CD8-positive, alpha-beta T cell (primary cell): ENCODE measurements at regions of chr17 and their contacts with region 1.

Region 1: GRCh38 chr17:78421484-78422266 is 43.2 kb downstream of the PGS1 start:
- DNase-seq: peak; percentile 59 to 82 (median 75)
- ATAC-seq: peak; percentile 97
- H3K4me3 ChIP-seq: no peak overlapping the region
- H3K4me3 Mint-ChIP-seq: no peak overlapping the region
- H3K27ac ChIP-seq: no peak overlapping the region
- H3K27ac Mint-ChIP-seq: no peak overlapping the region
- H3K4me1 ChIP-seq: peaks cover 5% of the 10 kb centered on the region
- H3K4me1 Mint-ChIP-seq: peaks cover 11% of the 10 kb centered on the region
- H3K27me3 ChIP-seq: no peaks in the 10 kb centered on the region
- H3K27me3 Mint-ChIP-seq: no peaks in the 10 kb centered on the region
- CTCF ChIP-seq: peak; percentile 99

Region 2: GRCh38 chr17:78089576-78090281 is 331.9 kb before region 1 on chr17:
- CTCF ChIA-PET with region 1: interaction called, 3 read pairs
- POLR2A ChIA-PET with region 1: no interaction called
- intact Hi-C with region 1: loop called in 1 of 2 experiments (anchors 5 kb)
- DNase-seq: no peak
- ATAC-seq: no peak
- H3K4me3 ChIP-seq: no peak overlapping the region
- H3K4me3 Mint-ChIP-seq: no peak overlapping the region
- H3K27ac ChIP-seq: no peak overlapping the region
- H3K27ac Mint-ChIP-seq: peak overlapping the region; percentile 46
- H3K4me1 ChIP-seq: no peaks in the 10 kb centered on the region
- H3K4me1 Mint-ChIP-seq: peaks cover 3% of the 10 kb centered on the region
- H3K27me3 ChIP-seq: no peaks in the 10 kb centered on the region
- H3K27me3 Mint-ChIP-seq: no peaks in the 10 kb centered on the region
- CTCF ChIP-seq: no peak

Region 3: GRCh38 chr17:78112518-78113226 is 309.0 kb before region 1 on chr17:
- CTCF ChIA-PET with region 1: interaction called, 4 read pairs
- POLR2A ChIA-PET with region 1: no interaction called
- intact Hi-C with region 1: loop called in 1 of 2 experiments (anchors 1 kb)
- DNase-seq: peak; percentile 62 to 91 (median 78)
- ATAC-seq: peak; percentile 67
- H3K4me3 ChIP-seq: no peak overlapping the region
- H3K4me3 Mint-ChIP-seq: peak overlapping the region; percentile 42
- H3K27ac ChIP-seq: peak overlapping the region in 1 of 2 experiments; percentile 74
- H3K27ac Mint-ChIP-seq: peak overlapping the region; percentile 90
- H3K4me1 ChIP-seq: peaks cover 45% of the 10 kb centered on the region
- H3K4me1 Mint-ChIP-seq: peaks cover 42% of the 10 kb centered on the region
- H3K27me3 ChIP-seq: no peaks in the 10 kb centered on the region
- H3K27me3 Mint-ChIP-seq: no peaks in the 10 kb centered on the region
- CTCF ChIP-seq: peak; percentile 99

Region 4: DNA sequence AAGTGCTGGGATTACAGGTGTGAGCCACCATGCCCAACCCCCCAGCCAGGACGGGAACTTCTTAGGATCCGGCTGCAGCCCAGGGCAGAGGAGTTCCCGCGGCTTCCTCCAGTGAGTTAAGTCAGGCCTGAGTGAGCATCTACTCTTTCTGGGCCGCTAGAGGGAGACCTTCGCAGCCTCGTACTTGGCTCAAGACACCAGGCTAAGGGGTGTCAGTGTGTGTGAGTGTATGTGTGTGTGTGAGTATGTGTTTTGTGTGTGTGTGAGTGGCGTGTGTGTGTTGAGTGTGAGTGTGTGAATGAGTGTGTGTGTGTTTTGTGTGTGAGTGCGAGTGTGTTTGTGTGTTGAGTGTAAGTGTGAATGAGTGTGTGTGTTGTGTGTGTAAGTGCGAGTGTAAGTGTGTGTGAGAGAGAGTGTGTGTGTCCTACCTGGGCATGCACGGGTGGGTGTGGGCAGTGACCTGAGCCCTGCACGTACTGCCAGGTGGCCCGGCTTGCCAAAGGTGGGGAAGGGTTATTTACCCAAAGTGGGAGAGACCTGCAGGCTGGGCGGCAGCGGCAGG is 131.8 kb before region 1 on chr17:
- CTCF ChIA-PET with region 1: interaction called, 44 read pairs
- POLR2A ChIA-PET with region 1: interaction called, 4 read pairs
- intact Hi-C with region 1: loop called (anchors 1 kb)
- DNase-seq: peak; percentile 49 to 89 (median 77)
- ATAC-seq: peak; percentile 99
- H3K4me3 ChIP-seq: no peak overlapping the region
- H3K4me3 Mint-ChIP-seq: no peak overlapping the region
- H3K27ac ChIP-seq: no peak overlapping the region
- H3K27ac Mint-ChIP-seq: no peak overlapping the region
- H3K4me1 ChIP-seq: peaks cover 9% of the 10 kb centered on the region
- H3K4me1 Mint-ChIP-seq: peaks cover 4% of the 10 kb centered on the region
- H3K27me3 ChIP-seq: no peaks in the 10 kb centered on the region
- H3K27me3 Mint-ChIP-seq: no peaks in the 10 kb centered on the region
- CTCF ChIP-seq: peak; percentile 68

Region 5: GRCh38 chr17:78383725-78384471 is 37.8 kb before region 1 on chr17:
- CTCF ChIA-PET with region 1: interaction called, 14 read pairs
- POLR2A ChIA-PET with region 1: no interaction called
- intact Hi-C with region 1: loop called in 1 of 2 experiments (anchors 5 kb)
- DNase-seq: peak in 4 of 9 experiments; percentile 16 to 54 (median 25)
- ATAC-seq: no peak
- H3K4me3 ChIP-seq: no peak overlapping the region
- H3K4me3 Mint-ChIP-seq: peak overlapping the region; percentile 51
- H3K27ac ChIP-seq: peak overlapping the region in 1 of 2 experiments; percentile 57
- H3K27ac Mint-ChIP-seq: peak overlapping the region; percentile 91
- H3K4me1 ChIP-seq: peaks cover 92% of the 10 kb centered on the region
- H3K4me1 Mint-ChIP-seq: peaks cover 86% of the 10 kb centered on the region
- H3K27me3 ChIP-seq: no peaks in the 10 kb centered on the region
- H3K27me3 Mint-ChIP-seq: no peaks in the 10 kb centered on the region
- CTCF ChIP-seq: no peak

Region 6: DNA sequence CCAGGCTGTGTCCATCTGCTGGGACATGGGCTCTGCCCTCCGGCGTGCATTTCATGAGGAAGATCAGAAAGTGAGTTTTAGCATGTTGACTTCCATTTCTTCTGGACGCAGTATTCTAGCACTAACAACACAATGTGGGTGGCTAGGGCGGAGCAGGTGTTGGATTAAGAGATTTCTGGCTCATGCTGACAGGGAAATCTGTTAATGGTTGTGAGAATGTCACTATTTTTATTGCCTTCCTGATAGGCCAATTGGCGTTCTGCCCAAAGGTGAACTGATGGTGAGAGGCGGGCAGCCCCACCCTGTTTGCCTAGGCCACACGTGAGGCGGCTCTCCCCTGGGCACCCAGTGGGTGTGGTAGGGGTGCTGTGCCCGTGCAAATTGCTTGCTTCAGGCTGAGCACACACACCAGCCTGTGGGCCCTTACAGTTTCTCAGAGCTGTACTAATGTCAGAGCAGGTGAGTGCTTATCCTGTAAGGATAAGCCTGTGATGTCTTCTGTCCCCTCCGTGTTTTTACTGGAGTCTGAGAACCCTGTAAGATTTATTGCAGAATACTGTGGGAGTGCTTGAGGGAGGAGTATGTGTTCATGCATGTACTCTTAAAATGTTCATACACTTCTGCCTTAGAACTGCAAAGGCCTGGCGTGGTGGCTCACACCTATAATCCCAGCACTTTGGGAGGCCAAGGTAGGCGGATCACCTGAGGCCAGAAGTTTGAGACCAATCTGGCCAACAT is 12.3 kb before region 1 on chr17:
- CTCF ChIA-PET with region 1: interaction called, 14 read pairs
- POLR2A ChIA-PET with region 1: interaction called, 3 read pairs
- intact Hi-C with region 1: no loop called
- DNase-seq: no peak
- ATAC-seq: no peak
- H3K4me3 ChIP-seq: no peak overlapping the region
- H3K4me3 Mint-ChIP-seq: no peak overlapping the region
- H3K27ac ChIP-seq: no peak overlapping the region
- H3K27ac Mint-ChIP-seq: peak overlapping the region; percentile 57
- H3K4me1 ChIP-seq: peaks cover 23% of the 10 kb centered on the region
- H3K4me1 Mint-ChIP-seq: peaks cover 46% of the 10 kb centered on the region
- H3K27me3 ChIP-seq: no peaks in the 10 kb centered on the region
- H3K27me3 Mint-ChIP-seq: no peaks in the 10 kb centered on the region
- CTCF ChIP-seq: no peak